Lower lobe of right lung (tissue), 2 donors: ENCODE measurements at regions of chr3 and their contacts with region 1.

Region 1: GRCh38 chr3:66816090-66816761 is 181.9 kb upstream of the KBTBD8 start:
- DNase-seq: no peak
- ATAC-seq: peak; percentile 88 to 92
- H3K4me3 ChIP-seq: no peak overlapping the region
- H3K27ac ChIP-seq: no peak overlapping the region
- H3K4me1 ChIP-seq: peaks cover 6% of the 10 kb centered on the region
- H3K27me3 ChIP-seq: no peaks in the 10 kb centered on the region
- CTCF ChIP-seq: peak; percentile 53

Region 2: DNA sequence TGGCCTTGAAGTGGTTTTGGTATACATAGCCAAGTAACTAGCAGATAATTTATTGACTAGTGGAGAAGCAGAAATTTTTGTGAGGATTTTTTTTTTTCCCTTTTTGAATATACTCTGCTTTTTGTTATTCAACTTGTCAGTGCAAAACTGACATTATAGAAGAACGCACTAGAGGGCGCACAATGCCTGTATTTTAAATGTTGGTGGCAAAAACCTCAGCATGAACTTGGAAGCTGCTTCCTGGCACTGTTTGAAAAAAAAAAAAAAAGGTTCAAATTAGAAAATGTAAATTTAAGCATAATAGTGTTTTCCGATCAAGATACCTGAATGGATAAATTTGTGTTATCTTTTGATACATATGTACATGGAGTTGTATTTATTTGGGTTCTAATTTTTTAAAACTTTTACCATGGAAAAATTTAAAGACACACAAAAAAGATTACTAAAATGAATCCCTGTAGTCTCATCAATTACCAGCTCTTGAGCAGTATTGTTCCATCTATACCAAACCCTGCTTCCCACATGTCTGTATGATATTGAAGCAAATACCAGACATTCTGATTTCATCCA is 539.4 kb before region 1 on chr3:
- intact Hi-C with region 1: loop called (anchors 10 kb)
- DNase-seq: no peak
- ATAC-seq: no peak
- H3K4me3 ChIP-seq: no peak overlapping the region
- H3K27ac ChIP-seq: no peak overlapping the region
- H3K4me1 ChIP-seq: no peaks in the 10 kb centered on the region
- H3K27me3 ChIP-seq: no peaks in the 10 kb centered on the region
- CTCF ChIP-seq: peak; percentile 70

Region 3: DNA sequence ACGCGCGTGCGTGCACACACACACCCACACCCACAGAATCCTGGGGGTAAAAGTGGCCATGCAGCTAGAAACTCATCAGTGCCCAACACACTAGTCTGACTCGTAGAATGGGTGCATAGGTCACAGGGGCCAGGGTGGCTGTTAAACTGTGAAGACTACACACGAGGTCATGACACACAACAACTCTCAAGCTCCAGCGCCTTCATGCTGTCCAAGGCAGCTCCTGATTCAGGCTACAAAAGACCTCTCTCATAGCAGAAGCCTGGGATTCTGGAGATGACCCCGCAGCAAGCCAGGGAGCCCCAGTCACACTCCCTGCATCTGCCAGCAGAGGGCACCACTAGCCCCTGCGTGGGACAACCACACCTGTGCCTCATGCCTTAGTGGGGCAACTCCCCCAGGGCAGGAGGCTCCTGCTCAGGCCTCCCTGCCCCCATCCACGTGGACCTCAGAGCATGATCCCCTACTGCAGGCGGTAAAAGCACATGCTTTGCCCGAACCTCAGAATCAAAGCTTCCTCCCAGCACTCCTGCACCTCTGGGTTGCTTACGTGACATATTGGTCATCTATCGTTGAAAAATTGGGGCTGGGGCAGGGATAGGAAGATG is 408.5 kb before region 1 on chr3:
- intact Hi-C with region 1: loop called (anchors 10 kb)
- DNase-seq: peak; percentile 75
- ATAC-seq: peak; percentile 82 to 87
- H3K4me3 ChIP-seq: no peak overlapping the region
- H3K27ac ChIP-seq: no peak overlapping the region
- H3K4me1 ChIP-seq: no peaks in the 10 kb centered on the region
- H3K27me3 ChIP-seq: no peaks in the 10 kb centered on the region
- CTCF ChIP-seq: peak; percentile 94

Region 4: DNA sequence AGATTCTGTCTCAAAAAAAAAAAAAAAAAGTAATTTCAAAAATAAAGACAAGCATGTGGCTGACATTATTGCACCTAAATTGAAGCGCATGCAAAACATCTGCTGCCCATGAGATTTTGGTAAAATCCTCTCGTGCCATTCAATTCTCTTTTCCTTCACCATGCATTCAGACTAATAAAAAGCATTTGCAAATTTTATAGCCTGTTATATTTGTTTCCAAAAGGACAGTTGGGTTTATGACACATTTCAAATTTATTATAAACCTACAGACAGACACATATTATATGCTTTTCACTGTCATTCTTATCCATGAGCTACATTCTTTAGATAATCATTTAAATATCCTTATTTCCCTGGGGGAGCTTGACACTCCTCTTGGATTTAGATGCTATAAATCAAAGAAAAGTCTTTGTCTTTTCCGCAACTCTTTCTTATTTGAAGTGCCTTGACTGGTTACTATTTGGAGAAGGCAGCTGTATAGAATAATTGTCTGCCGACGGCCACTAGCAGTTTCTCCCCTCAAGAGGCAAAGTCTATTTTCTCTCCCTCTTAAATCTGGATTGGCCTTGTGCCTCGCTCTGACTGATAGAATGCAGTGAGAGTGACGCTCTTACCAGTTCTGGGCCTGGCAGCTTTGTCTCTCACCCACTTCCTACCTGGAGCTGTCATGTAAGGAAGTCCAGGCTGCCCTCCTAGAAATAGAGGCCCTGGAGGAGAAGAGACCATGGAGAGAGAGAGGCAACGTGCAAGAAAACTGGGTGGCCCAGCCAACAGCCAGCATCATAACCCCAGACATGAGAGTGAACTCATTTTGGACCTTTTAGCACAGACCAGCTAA is 308.6 kb before region 1 on chr3:
- intact Hi-C with region 1: no loop called
- DNase-seq: no peak
- ATAC-seq: peak in 1 of 2 donors; percentile 56
- H3K4me3 ChIP-seq: no peak overlapping the region
- H3K27ac ChIP-seq: no peak overlapping the region
- H3K4me1 ChIP-seq: no peaks in the 10 kb centered on the region
- H3K27me3 ChIP-seq: no peaks in the 10 kb centered on the region
- CTCF ChIP-seq: no peak

Region 5: GRCh38 chr3:66962664-66963063 is 146.4 kb after region 1 on chr3:
- intact Hi-C with region 1: no loop called
- DNase-seq: no peak
- ATAC-seq: no peak
- H3K4me3 ChIP-seq: no peak overlapping the region
- H3K27ac ChIP-seq: no peak overlapping the region
- H3K4me1 ChIP-seq: no peaks in the 10 kb centered on the region
- H3K27me3 ChIP-seq: no peaks in the 10 kb centered on the region
- CTCF ChIP-seq: no peak